Head of caudate nucleus (tissue), 42 donors: ENCODE measurements at regions of chr10 and their contacts with region 1.

Region 1: GRCh38 chr10:71396084-71396720 is 518 bp upstream of the CDH23 start:
- DNase-seq: peak in 36 of 42 donors; percentile 42 to 75 (median 60)

Region 2: GRCh38 chr10:71501402-71501801 is 105.2 kb after region 1 on chr10:
- intact Hi-C with region 1: no loop called
- DNase-seq: no peak

Region 3: DNA sequence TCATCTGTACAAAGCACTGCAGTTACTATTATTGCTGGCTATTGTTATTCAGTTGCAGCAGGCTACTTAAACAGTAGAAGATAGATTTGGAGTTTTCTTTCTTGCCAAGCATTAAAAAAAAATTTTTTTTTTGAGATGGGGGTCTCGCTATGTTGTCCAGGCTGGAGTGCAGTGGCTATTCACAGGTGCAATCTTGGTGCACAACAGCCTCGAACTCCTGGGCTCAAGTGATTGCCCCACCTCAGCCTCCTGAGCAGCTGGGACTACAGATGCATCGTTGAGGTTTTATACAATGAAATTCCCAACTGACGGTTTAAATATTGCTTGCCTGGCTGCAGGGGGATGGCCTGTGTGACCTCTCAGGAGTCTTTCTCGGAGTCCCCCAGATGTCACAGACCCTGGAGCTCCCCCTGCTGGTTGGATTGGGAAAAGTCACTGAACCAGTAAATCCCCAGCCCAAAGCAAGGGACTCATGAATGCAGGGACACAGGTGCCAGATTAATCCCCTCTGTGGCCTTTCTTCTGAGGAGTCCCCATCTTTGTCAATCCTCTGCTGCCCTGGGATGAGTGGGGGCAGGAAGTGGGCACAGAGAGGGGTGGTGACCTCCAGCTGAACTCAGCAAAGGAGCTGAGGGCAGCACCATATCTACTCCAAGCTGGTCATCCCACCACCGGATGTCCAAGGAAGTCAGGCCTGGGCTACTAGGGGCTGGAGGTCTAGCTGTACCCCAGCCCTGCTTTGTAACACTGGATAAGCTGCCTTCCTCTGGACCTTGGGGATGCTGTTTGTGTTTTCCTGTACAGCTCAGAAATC is 173.8 kb after region 1 on chr10:
- intact Hi-C with region 1: loop called (anchors 10 kb)
- DNase-seq: peak; percentile 55 to 95 (median 86)